ENCODE measurements at regions of chr19 and their contacts with region 1.

Region 1: DNA sequence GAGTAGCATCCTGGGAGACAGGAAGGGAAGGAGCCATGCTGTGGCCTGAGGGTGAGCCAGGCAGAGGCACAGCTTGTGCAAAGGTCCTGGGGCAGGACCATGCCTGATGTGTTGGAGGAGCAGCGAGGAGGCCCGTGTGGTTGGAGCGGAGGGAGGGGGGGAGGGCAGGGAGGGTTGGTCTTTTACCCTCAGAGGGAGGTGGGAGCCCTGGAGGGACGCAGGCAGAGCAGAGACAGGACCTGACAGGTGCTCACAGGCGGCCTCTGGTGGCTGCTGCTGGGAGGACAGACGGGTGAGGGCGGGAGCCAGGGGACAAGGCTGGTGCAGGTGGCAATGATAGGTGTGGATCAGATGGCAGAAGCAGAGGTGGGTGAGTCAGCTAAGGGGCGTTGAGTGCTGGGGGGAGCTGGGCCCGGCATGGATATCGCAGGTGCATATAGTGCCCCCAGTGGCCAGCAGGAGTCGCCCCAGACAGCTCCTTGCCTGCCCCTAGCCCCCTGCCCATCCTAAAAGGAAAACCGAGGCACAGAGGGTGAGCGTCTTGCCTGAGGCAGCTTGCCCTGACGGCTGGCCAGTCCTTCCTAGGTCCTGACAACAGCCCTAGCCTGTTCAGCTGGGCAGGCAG is 9.8 kb upstream of the GNA15 start:
- DNase-seq: no peak
- H3K4me3 ChIP-seq: no peak overlapping the region
- CTCF ChIP-seq: peak; percentile 62

Region 2: DNA sequence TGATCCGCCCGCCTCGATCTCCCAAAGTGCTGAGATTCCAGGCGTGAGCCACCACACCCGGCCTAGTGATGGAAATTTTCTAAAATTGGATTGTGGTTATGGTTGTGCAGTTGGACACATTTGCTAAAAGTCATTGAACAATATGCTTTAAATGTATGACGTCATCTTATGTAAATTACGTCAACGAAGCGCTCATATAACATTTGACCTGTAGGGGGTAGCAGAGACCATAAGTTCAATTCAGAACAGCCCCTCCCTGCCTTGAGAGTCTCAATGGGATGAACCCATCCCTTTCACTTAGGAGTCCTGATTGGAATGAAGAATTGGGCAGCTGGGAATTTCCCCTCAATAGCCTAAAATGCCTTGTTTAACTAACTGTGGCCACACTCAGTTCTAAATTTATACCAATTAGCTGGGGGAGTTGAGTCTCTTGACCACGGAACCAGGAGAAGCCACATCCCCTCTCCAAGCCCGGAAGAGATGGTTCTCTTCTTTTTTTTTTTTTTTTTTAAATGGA is 163.9 kb before region 1 on chr19:
- CTCF ChIA-PET with region 1: interaction called, 20 read pairs
- POLR2A ChIA-PET with region 1: no interaction called
- DNase-seq: no peak
- H3K4me3 ChIP-seq: peak overlapping the region; percentile 12; the same call in 1 of the 2 replicates
- CTCF ChIP-seq: peak; percentile 43

Region 3: DNA sequence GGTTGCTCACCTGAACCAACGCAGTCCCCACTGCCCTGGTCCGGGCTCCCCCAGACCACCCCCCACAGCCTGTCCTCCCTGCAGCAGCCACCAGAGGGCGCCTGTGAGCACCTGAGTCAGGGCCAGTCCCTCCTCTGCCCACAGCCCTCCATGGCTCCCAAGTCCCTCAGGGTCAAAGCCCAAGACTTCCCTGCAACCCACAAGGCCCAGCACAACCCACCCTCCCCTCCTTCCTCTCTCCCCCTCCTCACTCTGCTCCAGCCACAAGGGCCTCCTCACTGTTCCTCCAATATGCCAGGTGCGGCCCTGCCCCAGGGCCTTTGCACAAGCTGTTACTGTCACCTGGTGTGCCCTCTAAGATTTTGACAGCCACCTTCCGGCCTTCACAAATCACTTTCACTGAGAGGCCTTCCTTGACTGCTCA is 20.7 kb after region 1 on chr19:
- CTCF ChIA-PET with region 1: interaction called, 113 read pairs
- POLR2A ChIA-PET with region 1: no interaction called
- DNase-seq: no peak
- H3K4me3 ChIP-seq: no peak overlapping the region
- CTCF ChIP-seq: peak; percentile 90

Region 4: DNA sequence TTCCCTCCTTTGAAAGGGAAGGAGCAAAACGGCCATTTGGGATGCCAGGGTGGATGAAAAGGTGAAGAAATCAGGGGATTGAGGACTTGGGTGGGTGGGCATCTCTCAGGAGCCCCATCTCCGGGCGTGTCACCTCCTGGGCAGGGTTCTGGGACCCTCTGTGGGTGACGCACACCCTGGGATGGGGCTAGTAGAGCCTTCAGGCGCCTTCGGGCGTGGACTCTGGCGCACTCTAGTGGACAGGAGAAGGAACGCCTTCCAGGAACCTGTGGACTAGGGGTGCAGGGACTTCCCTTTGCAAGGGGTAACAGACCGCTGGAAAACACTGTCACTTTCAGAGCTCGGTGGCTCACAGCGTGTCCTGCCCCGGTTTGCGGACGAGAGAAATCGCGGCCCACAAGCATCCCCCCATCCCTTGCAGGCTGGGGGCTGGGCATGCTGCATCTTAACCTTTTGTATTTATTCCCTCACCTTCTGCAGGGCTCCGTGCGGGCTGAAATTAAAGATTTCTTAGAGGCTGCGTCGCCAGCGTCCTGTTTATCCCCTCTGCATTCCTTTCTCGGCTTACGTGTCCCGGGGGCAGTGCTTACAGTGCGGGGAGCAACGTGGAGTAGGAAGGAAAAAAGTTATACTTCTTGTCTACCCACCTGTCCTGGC is 37.3 kb after region 1 on chr19:
- CTCF ChIA-PET with region 1: interaction called, 282 read pairs
- POLR2A ChIA-PET with region 1: no interaction called
- DNase-seq: no peak
- H3K4me3 ChIP-seq: no peak overlapping the region
- CTCF ChIP-seq: peak; percentile 90

Region 5: GRCh38 chr19:3207466-3208242 is 81.6 kb after region 1 on chr19:
- CTCF ChIA-PET with region 1: no interaction called
- POLR2A ChIA-PET with region 1: no interaction called
- DNase-seq: no peak
- H3K4me3 ChIP-seq: no peak overlapping the region
- CTCF ChIP-seq: no peak

Region 6: DNA sequence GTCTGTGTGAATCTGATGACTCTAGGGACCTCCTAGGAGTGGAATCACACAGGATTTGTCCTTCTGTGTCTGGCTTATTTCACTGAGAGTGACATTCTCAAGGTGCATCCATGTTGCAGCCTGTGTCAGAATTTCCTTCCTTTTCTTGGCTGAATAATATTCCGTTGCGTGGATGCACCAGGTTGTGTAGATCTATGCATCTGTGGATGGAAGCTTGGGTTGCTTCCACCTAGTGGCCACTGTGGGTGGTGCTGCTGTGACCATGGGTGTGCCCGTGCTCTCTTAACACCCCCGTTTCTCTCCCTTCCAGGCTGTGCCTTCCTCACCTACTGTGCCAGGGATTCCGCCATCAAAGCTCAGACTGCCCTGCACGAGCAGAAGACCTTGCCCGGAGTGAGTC is 124.7 kb after region 1 on chr19:
- CTCF ChIA-PET with region 1: no interaction called
- POLR2A ChIA-PET with region 1: no interaction called
- DNase-seq: no peak
- H3K4me3 ChIP-seq: no peak overlapping the region
- CTCF ChIP-seq: peak; percentile 16

Region 7: GRCh38 chr19:3263866-3264265 is 137.9 kb after region 1 on chr19:
- CTCF ChIA-PET with region 1: no interaction called
- POLR2A ChIA-PET with region 1: no interaction called
- DNase-seq: no peak
- H3K4me3 ChIP-seq: no peak overlapping the region
- CTCF ChIP-seq: no peak

Region 8: GRCh38 chr19:3324321-3324856 is 198.4 kb after region 1 on chr19:
- CTCF ChIA-PET with region 1: no interaction called
- POLR2A ChIA-PET with region 1: no interaction called
- DNase-seq: no peak
- H3K4me3 ChIP-seq: no peak overlapping the region
- CTCF ChIP-seq: peak; percentile 78